Activated T-helper 1 cell treated with anti-CD3 and anti-CD28 coated beads, Interleukin-12 subunit alpha, Interleukin-12 subunit beta, Interleukin-2, Interleukin-4 antibody, amounts not matched to agents 30 ng/mL and 10 ng/mL and 1 ng/mL, durations not matched to agents 14 hours and 24 hours and 36 hours (primary cell): ENCODE measurements at regions of chr5 and their contacts with region 1.

Region 1: DNA sequence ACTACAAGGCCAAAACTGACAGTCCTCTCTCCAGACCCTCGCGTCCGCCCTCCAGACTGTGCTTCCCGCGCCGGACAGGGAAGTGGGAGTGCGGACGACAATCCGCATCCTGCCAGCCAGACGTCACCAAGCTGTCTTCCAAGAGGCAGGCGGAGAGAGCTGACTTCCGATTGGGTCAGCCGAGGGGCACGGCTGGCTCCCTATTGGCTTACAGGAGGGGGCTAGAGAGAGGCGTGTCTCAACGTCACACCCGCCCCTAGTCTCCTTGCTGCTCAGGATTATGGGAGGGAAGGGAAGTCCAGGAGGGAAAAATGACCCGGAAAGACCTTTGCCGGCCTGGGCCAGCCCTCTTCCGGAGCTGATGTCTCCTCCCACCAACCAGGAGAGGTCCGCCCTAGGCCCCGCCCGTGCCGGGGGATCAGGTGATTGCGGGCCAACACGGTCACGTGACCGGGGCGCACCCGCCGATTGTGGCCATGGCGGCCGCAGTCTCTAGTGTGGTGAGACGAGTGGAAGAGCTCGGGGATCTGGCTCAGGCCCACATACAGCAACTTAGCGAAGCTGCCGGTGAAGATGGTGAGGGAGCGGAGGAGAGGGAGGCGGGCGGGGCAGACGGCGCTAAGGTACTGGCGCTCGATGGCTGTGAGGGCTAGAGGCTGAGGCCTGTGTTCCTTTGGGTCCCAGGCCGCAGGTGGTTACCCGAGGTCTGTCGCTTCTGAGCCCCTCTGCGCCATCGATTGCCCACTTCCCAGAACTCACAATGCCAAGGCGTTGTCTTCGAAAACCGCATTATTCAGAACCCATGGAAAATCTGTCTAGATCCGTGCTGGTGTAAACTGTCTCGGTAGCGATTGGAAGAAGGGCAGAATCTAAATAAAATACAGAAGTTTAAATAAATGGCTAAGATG is at the start of gene RIMOC1:
- DNase-seq: peak; percentile 98
- H3K4me3 Mint-ChIP-seq: peak within 1 kb of the TSS; percentile 99
- H3K27ac Mint-ChIP-seq: peak within 1 kb of the TSS; percentile 100
- H3K4me1 Mint-ChIP-seq: peaks cover 54% of the 10 kb centered on the region
- H3K27me3 Mint-ChIP-seq: peaks cover 10% of the 10 kb centered on the region
- total RNA-seq, gene RIMOC1: 28.0 and 29.0 TPM in 2 replicates

Region 2: DNA sequence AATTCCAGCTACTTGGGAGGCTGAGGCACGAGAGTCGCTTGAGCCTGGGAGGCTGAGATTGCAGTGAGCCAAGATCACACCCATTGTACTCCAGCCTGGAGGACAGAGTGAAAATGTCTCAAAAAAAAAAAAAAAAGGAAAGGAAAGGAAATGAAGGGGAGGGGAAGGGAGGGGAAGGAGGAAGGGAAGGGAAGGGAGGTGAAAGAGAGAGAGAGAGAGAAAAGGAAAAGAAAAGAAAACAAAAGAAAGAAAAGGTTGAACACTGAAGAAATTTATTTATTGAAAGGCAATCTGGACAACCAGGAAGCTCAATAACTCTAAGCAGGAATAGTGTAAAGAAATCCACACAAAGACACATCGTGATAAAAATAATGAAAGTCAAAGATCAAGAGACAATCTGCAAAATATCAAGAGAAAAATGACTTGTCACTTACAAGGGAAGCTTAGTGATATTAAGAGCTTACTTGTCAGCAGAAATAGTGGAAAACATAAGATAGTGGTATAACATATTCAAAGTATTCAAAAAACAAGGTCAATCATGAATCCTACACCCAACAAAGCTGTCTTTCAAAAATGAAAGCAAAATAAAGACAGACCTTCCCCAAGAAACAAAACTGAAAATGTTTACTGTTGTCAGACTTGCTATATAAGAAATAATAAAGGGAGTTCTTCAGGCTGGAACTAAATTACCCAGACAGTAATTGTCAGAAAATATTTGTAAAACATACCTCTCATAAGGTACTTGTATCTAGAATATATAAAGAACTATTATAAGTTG is 10.9 kb before region 1 on chr5:
- intact Hi-C with region 1: loop called (anchors 1 kb)
- DNase-seq: no peak
- H3K4me3 Mint-ChIP-seq: peak overlapping the region; percentile 38
- H3K27ac Mint-ChIP-seq: peak overlapping the region; percentile 4
- H3K4me1 Mint-ChIP-seq: peaks cover 24% of the 10 kb centered on the region
- H3K27me3 Mint-ChIP-seq: peaks cover 19% of the 10 kb centered on the region

Region 3: DNA sequence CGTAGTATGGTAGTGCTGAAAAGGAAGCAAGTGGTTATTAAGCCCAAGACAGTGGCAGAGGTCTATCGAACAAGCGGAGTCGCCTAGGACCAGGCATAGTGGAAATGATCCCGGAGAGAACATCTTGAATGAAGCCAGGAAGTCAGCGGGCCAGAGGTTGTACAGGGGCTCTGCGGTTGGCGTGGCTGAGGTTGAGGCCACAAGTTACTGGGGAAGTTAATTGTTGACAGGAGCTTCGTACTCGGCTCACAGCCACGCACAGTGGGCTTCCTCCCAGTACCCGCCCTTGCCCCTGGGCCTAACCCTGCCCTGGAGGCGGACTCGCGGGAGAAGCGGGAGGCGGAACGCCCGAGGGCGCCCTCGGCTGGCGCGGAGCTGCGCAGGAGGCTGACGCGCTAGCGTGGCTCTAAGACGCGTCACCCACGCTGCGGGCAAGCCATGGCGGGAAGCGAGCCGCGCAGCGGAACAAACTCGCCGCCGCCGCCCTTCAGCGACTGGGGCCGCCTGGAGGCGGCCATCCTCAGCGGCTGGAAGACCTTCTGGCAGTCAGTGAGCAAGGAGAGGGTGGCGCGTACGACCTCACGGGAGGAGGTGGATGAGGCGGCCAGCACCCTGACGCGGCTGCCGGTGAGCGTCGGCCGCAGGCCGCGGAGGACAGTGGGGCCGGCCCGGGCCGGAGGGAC is 20.9 kb after region 1 on chr5 and contains the start of gene FBXO4:
- intact Hi-C with region 1: loop called (anchors 1 kb)
- DNase-seq: peak; percentile 87
- H3K4me3 Mint-ChIP-seq: peak within 1 kb of the TSS; percentile 91
- H3K27ac Mint-ChIP-seq: peak within 1 kb of the TSS; percentile 98
- H3K4me1 Mint-ChIP-seq: peaks cover 13% of the 10 kb centered on the region
- H3K27me3 Mint-ChIP-seq: no peaks in the 10 kb centered on the region
- total RNA-seq, gene FBXO4: 14.1 and 17.8 TPM in 2 replicates

Region 4: GRCh38 chr5:41985945-41986344 is 81.8 kb after region 1 on chr5:
- intact Hi-C with region 1: no loop called
- DNase-seq: no peak
- H3K4me3 Mint-ChIP-seq: no peak overlapping the region
- H3K27ac Mint-ChIP-seq: no peak overlapping the region
- H3K4me1 Mint-ChIP-seq: no peaks in the 10 kb centered on the region
- H3K27me3 Mint-ChIP-seq: peaks cover 10% of the 10 kb centered on the region